AG04450 (cell line): ENCODE measurements at regions of chr3 and their contacts with region 1.

Region 1: DNA sequence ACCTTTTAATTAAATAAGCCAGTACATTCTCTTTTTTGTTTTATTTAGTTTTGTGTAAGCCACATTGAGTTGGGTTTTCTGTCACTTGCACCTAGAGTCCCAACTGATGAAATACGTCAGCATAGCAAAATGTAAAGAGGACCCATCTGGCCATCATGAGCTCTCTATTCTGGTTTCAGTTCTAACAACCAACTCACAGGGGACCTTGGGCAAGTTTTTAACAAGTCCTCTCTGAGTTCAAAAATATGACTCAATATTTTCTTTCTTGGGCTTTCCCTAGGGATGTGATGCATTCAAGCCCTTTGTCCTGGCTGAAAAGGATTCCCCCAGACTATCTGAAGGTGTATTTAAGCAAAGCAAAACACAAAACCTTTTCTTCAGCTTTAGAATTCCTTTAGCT is 32.9 kb downstream of the PLCH1 start:
- DNase-seq: no peak
- H3K4me3 ChIP-seq: no peak overlapping the region
- H3K27ac ChIP-seq: no peak overlapping the region
- H3K27me3 ChIP-seq: peaks cover 2% of the 10 kb centered on the region
- CTCF ChIP-seq: no peak

Region 2: GRCh38 chr3:155382396-155383042 is 329.5 kb before region 1 on chr3:
- CTCF ChIA-PET with region 1: interaction called, 14 read pairs
- POLR2A ChIA-PET with region 1: no interaction called
- DNase-seq: no peak
- H3K4me3 ChIP-seq: no peak overlapping the region
- H3K27ac ChIP-seq: no peak overlapping the region
- H3K27me3 ChIP-seq: no peaks in the 10 kb centered on the region
- CTCF ChIP-seq: peak; percentile 73

Region 3: DNA sequence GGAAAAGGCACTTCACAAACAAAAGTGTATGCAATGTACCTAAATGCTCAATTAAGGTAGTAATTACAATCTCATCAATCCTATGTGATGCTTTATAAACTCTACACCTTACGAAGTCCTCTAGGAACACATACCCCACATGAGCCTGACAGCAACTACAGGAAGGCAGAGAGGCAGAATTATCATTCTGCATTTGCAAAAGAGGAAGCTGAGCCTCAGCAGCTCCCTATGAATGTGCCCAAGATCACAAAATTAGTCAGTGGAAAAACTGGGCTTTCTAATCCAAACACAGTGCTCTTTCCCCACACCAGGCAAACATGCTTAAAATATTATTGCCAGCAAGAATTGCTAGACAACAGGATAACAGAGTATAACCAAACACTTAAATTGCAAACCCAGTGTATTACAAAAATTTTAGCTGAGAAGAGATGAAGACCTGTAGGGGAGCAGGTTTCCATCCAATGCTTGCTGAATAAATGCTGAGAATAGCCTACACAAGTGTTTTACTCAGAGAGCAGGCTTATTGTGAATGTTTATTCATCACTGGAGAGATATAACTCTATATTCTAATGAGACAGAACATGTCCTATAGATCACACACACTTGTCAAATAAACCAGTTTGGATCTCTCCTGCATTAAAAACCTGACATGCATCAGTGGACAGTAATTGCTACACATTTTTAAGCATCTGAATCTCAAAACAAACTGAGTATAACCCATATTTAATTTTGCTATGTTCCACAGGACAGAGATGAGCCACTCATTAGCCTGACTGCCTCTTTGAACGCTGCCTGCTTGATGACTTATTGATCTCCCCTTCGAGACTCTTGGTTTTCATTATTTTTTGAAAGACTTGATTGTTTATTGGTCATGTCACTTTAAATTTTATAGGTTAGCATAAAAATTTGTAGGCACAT is 29.3 kb before region 1 on chr3:
- CTCF ChIA-PET with region 1: no interaction called
- POLR2A ChIA-PET with region 1: no interaction called
- DNase-seq: no peak
- H3K4me3 ChIP-seq: no peak overlapping the region
- H3K27ac ChIP-seq: no peak overlapping the region
- H3K27me3 ChIP-seq: no peaks in the 10 kb centered on the region
- CTCF ChIP-seq: no peak